GM12878 (cell line): ENCODE measurements at regions of chr7 and their contacts with region 1.

Region 1: DNA sequence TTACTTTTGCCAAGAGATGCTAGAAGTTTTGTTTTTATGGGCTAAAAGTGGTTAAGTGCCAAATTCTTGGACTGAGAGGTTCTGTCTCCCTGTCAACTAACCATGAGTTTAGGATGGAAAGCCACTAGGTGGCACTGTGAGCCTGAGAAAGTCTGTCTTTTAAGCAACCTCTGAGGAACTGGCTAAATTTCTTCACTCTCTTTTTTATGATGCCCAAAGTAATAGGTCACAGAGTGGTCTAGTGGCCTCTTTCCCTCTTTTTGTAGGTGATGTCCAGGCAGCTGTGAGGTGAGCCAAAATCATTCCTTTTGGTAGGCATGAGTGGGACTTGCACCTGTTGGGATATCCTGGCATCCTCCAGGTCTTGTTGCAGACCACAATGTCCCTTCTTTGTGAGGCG is 56.8 kb downstream of the SND1 start:
- DNase-seq: peak; percentile 34
- ATAC-seq: peak; percentile 90
- H3K4me3 ChIP-seq: no peak overlapping the region
- H3K27ac ChIP-seq: no peak overlapping the region
- H3K4me1 ChIP-seq: no peaks in the 10 kb centered on the region
- H3K27me3 ChIP-seq: no peaks in the 10 kb centered on the region
- CTCF ChIP-seq: peak; percentile 60 to 74 (median 68)
- EP300 ChIP-seq: no peak
- POLR2A ChIP-seq: no peak
- RAD21 ChIP-seq: peak; percentile 84

Region 2: DNA sequence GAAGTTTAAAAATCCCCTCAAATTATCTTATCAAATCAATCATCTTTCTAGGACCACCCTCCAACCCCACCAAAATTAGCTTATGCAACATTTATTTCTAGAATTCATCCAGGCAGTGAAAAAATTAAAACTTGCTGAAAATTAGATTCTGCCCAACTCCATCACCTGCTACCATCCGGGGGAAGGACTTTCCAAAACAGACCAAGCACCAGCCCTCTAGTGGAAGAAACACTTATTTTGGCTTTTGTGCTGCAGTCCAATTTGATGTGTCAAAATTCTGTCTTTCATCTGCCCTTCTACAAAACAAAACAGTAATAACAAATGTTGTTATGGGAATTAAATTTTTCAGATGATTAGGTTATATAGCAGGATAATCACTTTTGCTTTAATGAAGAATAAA is 158.5 kb before region 1 on chr7:
- CTCF ChIA-PET with region 1: no interaction called
- POLR2A ChIA-PET with region 1: no interaction called
- RAD21 ChIA-PET with region 1: no interaction called
- SMC1A ChIA-PET with region 1: no interaction called
- in situ Hi-C with region 1: no loop called
- intact Hi-C with region 1: no loop called
- DNase-seq: no peak
- ATAC-seq: no peak
- H3K4me3 ChIP-seq: no peak overlapping the region
- H3K27ac ChIP-seq: no peak overlapping the region
- H3K4me1 ChIP-seq: no peaks in the 10 kb centered on the region
- H3K27me3 ChIP-seq: no peaks in the 10 kb centered on the region
- CTCF ChIP-seq: peak in 2 of 3 experiments; percentile 17 to 26; a peak in 1 of 6 replicates
- EP300 ChIP-seq: no peak
- POLR2A ChIP-seq: no peak
- RAD21 ChIP-seq: no peak

Region 3: GRCh38 chr7:127692200-127692599 is 16.6 kb before region 1 on chr7:
- CTCF ChIA-PET with region 1: interaction called, 16 read pairs
- POLR2A ChIA-PET with region 1: no interaction called
- RAD21 ChIA-PET with region 1: no interaction called
- SMC1A ChIA-PET with region 1: interaction called, 10 read pairs
- in situ Hi-C with region 1: no loop called
- intact Hi-C with region 1: no loop called
- DNase-seq: no peak
- ATAC-seq: peak; percentile 40; the same call in 2 of the 3 replicates
- H3K4me3 ChIP-seq: no peak overlapping the region
- H3K27ac ChIP-seq: peak overlapping the region; percentile 64
- H3K4me1 ChIP-seq: peaks cover 16% of the 10 kb centered on the region
- H3K27me3 ChIP-seq: no peaks in the 10 kb centered on the region
- CTCF ChIP-seq: no peak
- EP300 ChIP-seq: no peak
- POLR2A ChIP-seq: no peak
- RAD21 ChIP-seq: no peak

Region 4: GRCh38 chr7:127792528-127793342 is 83.9 kb after region 1 on chr7:
- CTCF ChIA-PET with region 1: interaction called, 22 read pairs
- POLR2A ChIA-PET with region 1: no interaction called
- RAD21 ChIA-PET with region 1: interaction called, 6 read pairs
- SMC1A ChIA-PET with region 1: interaction called, 7 read pairs
- in situ Hi-C with region 1: no loop called
- intact Hi-C with region 1: no loop called
- DNase-seq: no peak
- ATAC-seq: peak; percentile 89
- H3K4me3 ChIP-seq: no peak overlapping the region
- H3K27ac ChIP-seq: no peak overlapping the region
- H3K4me1 ChIP-seq: peaks cover 5% of the 10 kb centered on the region; the same call in 1 of the 2 replicates
- H3K27me3 ChIP-seq: no peaks in the 10 kb centered on the region
- CTCF ChIP-seq: peak; percentile 49 to 89 (median 63)
- EP300 ChIP-seq: no peak
- POLR2A ChIP-seq: no peak
- RAD21 ChIP-seq: peak; percentile 38

Region 5: DNA sequence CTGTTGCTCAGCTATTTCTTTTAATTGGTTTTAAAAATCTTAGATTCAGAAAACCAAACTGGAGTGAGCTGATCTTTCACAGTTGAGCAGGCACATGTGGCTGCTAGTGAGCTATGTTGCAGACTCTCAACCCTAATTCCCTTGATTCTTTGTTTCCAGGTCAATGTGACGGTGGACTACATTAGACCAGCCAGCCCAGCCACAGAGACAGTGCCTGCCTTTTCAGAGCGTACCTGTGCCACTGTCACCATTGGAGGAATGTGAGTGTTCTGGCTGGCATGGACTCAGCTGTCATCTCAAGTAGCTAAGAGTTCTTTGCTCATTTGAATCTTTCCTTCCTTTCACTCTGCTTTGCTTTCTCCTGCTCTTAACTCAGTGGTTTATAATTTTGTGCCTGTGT is 135.4 kb after region 1 on chr7:
- CTCF ChIA-PET with region 1: no interaction called
- POLR2A ChIA-PET with region 1: no interaction called
- RAD21 ChIA-PET with region 1: no interaction called
- SMC1A ChIA-PET with region 1: no interaction called
- in situ Hi-C with region 1: no loop called
- intact Hi-C with region 1: no loop called
- DNase-seq: no peak
- ATAC-seq: no peak
- H3K4me3 ChIP-seq: no peak overlapping the region
- H3K27ac ChIP-seq: no peak overlapping the region
- H3K4me1 ChIP-seq: no peaks in the 10 kb centered on the region
- H3K27me3 ChIP-seq: no peaks in the 10 kb centered on the region
- CTCF ChIP-seq: no peak
- EP300 ChIP-seq: no peak
- POLR2A ChIP-seq: no peak
- RAD21 ChIP-seq: no peak

Region 6: GRCh38 chr7:128000854-128001265 is 292.1 kb after region 1 on chr7:
- CTCF ChIA-PET with region 1: interaction called, 5 read pairs
- POLR2A ChIA-PET with region 1: no interaction called
- RAD21 ChIA-PET with region 1: no interaction called
- SMC1A ChIA-PET with region 1: interaction called, 10 read pairs
- in situ Hi-C with region 1: no loop called
- intact Hi-C with region 1: no loop called
- DNase-seq: peak; percentile 55
- ATAC-seq: peak; percentile 91
- H3K4me3 ChIP-seq: no peak overlapping the region
- H3K27ac ChIP-seq: 0 out of 2 replicates have a peak overlapping the region, but pooled peaks have one; percentile 20
- H3K4me1 ChIP-seq: peaks cover 47% of the 10 kb centered on the region
- H3K27me3 ChIP-seq: no peaks in the 10 kb centered on the region
- CTCF ChIP-seq: no peak
- EP300 ChIP-seq: no peak
- POLR2A ChIP-seq: no peak
- RAD21 ChIP-seq: no peak

Region 7: GRCh38 chr7:128135515-128136214 is 426.9 kb after region 1 on chr7:
- CTCF ChIA-PET with region 1: interaction called, 27 read pairs
- POLR2A ChIA-PET with region 1: no interaction called
- RAD21 ChIA-PET with region 1: interaction called, 8 read pairs
- SMC1A ChIA-PET with region 1: interaction called, 3 read pairs
- in situ Hi-C with region 1: no loop called
- intact Hi-C with region 1: no loop called
- DNase-seq: no peak
- ATAC-seq: peak; percentile 98
- H3K4me3 ChIP-seq: peak overlapping the region; percentile 61
- H3K27ac ChIP-seq: no peak overlapping the region
- H3K4me1 ChIP-seq: peaks cover 4% of the 10 kb centered on the region
- H3K27me3 ChIP-seq: peaks cover 9% of the 10 kb centered on the region in 2 experiments
- CTCF ChIP-seq: peak; percentile 72 to 89 (median 75)
- EP300 ChIP-seq: no peak
- POLR2A ChIP-seq: no peak; the same call in 1 of the 2 replicates
- RAD21 ChIP-seq: peak; percentile 69

Region 8: GRCh38 chr7:128155100-128155740 is 446.4 kb after region 1 on chr7:
- CTCF ChIA-PET with region 1: no interaction called
- POLR2A ChIA-PET with region 1: no interaction called
- RAD21 ChIA-PET with region 1: no interaction called
- SMC1A ChIA-PET with region 1: no interaction called
- in situ Hi-C with region 1: no loop called
- intact Hi-C with region 1: no loop called
- DNase-seq: no peak
- ATAC-seq: no peak
- H3K4me3 ChIP-seq: no peak overlapping the region
- H3K27ac ChIP-seq: no peak overlapping the region
- H3K4me1 ChIP-seq: no peaks in the 10 kb centered on the region
- H3K27me3 ChIP-seq: peaks cover 2 to 9% of the 10 kb centered on the region in 2 experiments
- CTCF ChIP-seq: no peak
- EP300 ChIP-seq: no peak
- POLR2A ChIP-seq: no peak
- RAD21 ChIP-seq: no peak